Heart right ventricle (tissue), 16 donors: ENCODE measurements at regions of chr22 and their contacts with region 1.

Region 1: DNA sequence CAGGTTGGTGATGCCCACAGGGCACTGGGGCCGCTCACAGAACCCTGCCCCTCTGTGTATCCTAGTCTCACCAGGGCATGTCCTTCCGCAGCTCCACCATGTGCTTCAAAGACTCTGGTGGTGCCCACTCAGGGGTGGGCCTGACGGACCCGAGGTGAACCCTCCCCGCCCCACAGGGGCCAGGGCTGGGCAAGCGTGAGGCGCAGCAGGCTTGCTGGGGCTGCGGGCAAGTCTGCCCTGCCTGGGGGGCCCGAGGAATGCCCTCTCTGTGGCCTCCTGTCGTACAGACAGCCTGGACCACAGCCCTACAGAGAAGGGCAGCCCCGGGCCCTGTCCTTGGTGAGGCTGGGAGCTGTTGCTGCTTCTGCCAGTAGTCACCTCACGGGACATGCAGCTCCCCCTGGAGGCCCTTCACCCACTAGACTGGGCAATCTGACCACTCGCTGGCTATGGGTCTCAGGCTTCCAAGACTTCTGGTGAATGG is 40.2 kb downstream of the TBX1 start:
- DNase-seq: peak in 1 of 2 donors; percentile 20
- ATAC-seq: peak in 2 of 8 donors; percentile 33 to 41
- H3K4me3 ChIP-seq: no peak overlapping the region
- H3K27ac ChIP-seq: no peak overlapping the region
- H3K4me1 ChIP-seq: peaks cover 0 to 10% (median 3%) of the 10 kb centered on the region in 9 donors
- H3K27me3 ChIP-seq: no peaks in the 10 kb centered on the region
- CTCF ChIP-seq: peak in 7 of 9 donors; percentile 7 to 42 (median 23)

Region 2: GRCh38 chr22:19756288-19757128 is 44.3 kb before region 1 on chr22:
- intact Hi-C with region 1: loop called in 1 of 10 experiments (anchors 10 kb)
- DNase-seq: peak in 1 of 2 donors; percentile 59
- ATAC-seq: peak in 7 of 8 donors; percentile 21 to 54 (median 28)
- H3K4me3 ChIP-seq: peak overlapping the region in 9 of 10 donors; percentile 2 to 37 (median 17)
- H3K27ac ChIP-seq: no peak overlapping the region
- H3K4me1 ChIP-seq: peaks cover 14 to 43% (median 35%) of the 10 kb centered on the region in 9 donors
- H3K27me3 ChIP-seq: peaks cover 57 to 93% (median 83%) of the 10 kb centered on the region in 7 donors
- CTCF ChIP-seq: peak; percentile 16 to 51 (median 46)

Region 3: DNA sequence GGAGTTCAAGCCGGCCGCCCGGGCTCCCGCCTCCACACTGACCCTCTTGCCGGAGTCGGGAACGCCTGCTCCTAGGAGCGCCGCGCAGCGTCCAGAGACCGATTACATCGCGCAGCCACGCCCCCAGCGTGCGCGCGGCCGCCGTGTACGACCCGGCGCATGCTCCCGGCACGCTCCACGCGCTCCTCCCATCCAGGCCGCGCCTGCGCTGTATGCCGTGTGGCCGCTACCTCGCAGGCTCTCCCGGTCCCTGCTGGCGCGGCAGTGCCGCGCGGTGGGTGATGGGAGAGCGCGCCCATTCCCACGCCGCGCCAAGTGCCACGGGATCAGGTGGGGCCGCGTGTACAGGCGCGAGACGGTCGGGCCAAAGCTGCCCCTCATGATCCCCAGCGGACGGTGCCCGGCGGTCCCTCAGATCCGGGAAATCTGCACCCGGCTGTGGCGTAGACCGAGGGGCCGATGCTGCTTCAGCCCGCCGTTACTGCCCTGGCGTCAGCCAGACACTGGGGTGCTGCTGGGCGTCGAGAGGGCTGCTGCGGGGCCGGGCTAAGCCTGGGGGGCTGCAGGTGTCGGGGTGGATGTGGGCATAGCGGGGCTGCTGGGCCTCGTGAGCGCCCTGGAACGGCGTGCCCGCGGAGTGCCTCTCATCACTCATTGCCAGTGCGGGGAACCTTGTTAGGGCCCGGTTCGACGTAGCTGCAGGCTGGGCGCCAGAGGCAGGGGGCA is 54.1 kb after region 1 on chr22 and contains the starts of genes GNB1L and RTL10:
- intact Hi-C with region 1: loop called in 1 of 10 experiments (anchors 5 kb)
- DNase-seq: peak; percentile 96 to 99
- ATAC-seq: peak; percentile 98 to 99 (median 99)
- H3K4me3 ChIP-seq: peak within 1 kb of the TSS; percentile 69 to 98 (median 95)
- H3K27ac ChIP-seq: peak within 1 kb of the TSS; percentile 78 to 98 (median 94)
- H3K4me1 ChIP-seq: peaks cover 18 to 33% (median 27%) of the 10 kb centered on the region in 9 donors
- H3K27me3 ChIP-seq: no peaks in the 10 kb centered on the region
- CTCF ChIP-seq: peak in 6 of 9 donors; percentile 7 to 50 (median 32)
- total RNA-seq, gene GNB1L: 0.76 to 3.6 (median 1.8) TPM
- total RNA-seq, gene RTL10: 5.3 to 12.0 (median 7.2) TPM

Region 4: GRCh38 chr22:19948057-19948760 is 147.4 kb after region 1 on chr22:
- intact Hi-C with region 1: no loop called
- DNase-seq: no peak
- ATAC-seq: no peak
- H3K4me3 ChIP-seq: peak overlapping the region in 1 of 10 donors; percentile 34
- H3K27ac ChIP-seq: peak overlapping the region in 8 of 10 donors; percentile 3 to 96 (median 85)
- H3K4me1 ChIP-seq: peaks cover 21 to 95% (median 39%) of the 10 kb centered on the region in 9 donors
- H3K27me3 ChIP-seq: no peaks in the 10 kb centered on the region
- CTCF ChIP-seq: no peak

Region 5: GRCh38 chr22:19995626-19996335 is 195.0 kb after region 1 on chr22:
- intact Hi-C with region 1: no loop called
- DNase-seq: peak in 1 of 2 donors; percentile 25
- ATAC-seq: peak in 2 of 8 donors; percentile 2 to 38
- H3K4me3 ChIP-seq: no peak overlapping the region
- H3K27ac ChIP-seq: peak overlapping the region in 4 of 10 donors; percentile 8 to 31 (median 18)
- H3K4me1 ChIP-seq: peaks cover 21 to 62% (median 49%) of the 10 kb centered on the region in 9 donors
- H3K27me3 ChIP-seq: no peaks in the 10 kb centered on the region
- CTCF ChIP-seq: no peak